Mammary epithelial cell (primary cell): ENCODE measurements at regions of chr3 and their contacts with region 1.

Region 1: GRCh38 chr3:47890828-47891612 is 88.1 kb downstream of the DHX30 start:
- DNase-seq: no peak
- H3K4me3 ChIP-seq: no peak overlapping the region
- H3K27ac ChIP-seq: no peak overlapping the region
- H3K4me1 ChIP-seq: no peaks in the 10 kb centered on the region
- H3K27me3 ChIP-seq: no peaks in the 10 kb centered on the region
- CTCF ChIP-seq: no peak

Region 2: DNA sequence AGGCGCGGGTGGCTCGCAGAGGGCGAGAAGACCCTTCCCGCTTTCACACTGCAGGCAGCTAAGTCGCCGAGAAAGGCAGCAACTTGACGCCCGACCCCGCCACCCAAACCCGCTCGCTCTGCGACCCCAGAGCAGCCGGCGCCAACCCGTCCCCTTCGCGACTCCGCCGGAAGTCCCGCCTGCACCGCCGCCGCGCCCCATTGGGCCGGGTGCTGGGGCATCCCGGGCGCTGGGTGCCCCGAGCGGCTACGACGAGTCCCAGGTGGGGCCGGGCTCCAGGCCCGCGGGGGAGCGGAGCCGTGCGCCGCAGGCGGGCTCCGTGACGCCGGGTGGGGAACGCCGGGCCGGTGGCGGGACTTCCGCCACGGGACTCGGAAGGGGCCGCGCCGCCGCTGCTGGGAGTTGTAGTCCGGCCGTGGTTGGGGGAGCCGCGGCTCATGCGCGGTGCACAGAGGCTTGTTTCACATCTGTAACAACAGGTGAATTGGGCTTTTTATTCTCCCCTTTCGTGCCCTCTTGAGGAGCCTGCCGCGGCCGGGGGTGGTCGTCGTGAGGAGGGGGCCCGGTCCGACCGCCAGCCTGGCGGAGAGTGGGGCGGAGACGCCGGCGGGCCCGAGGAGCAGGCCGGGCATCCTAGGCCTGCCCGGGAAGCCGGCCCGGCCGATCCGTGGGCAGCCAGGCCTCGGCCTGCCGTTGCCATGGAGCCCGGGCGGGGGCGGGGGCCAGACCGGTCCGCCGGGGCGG is 88.1 kb before region 1 on chr3 and contains the start of gene DHX30:
- CTCF ChIA-PET with region 1: no interaction called
- dilution Hi-C with region 1: no loop called
- in situ Hi-C with region 1: no loop called
- intact Hi-C with region 1: no loop called
- DNase-seq: peak; percentile 86
- H3K4me3 ChIP-seq: peak within 1 kb of the TSS; percentile 74 to 92 (median 89)
- H3K27ac ChIP-seq: peak within 1 kb of the TSS; percentile 89
- H3K4me1 ChIP-seq: peaks cover 19% of the 10 kb centered on the region
- H3K27me3 ChIP-seq: no peaks in the 10 kb centered on the region
- CTCF ChIP-seq: no peak
- total RNA-seq, gene DHX30: 60.5 to 61.6 TPM

Region 3: DNA sequence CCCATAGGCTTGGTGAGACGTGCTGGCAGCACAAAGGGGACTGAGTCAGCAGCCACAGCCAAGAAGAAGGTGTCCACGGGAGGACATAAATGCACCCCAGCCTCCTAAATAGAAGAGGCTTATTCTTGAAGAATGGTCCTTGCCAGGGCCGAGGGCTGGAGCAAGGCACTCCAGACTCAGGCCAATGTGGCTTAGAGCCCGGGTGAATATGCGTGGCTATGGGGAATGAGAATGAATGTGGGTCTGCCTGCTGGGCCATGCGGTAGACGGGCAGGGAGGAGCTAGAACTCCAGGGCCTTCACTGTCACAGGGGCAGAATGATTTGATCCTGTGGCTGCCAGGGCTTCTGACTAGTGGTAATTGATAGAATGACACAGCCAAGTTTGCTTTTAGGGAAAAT is 54.0 kb before region 1 on chr3:
- CTCF ChIA-PET with region 1: no interaction called
- dilution Hi-C with region 1: loop called (anchors 5 kb)
- in situ Hi-C with region 1: no loop called
- intact Hi-C with region 1: no loop called
- DNase-seq: no peak
- H3K4me3 ChIP-seq: no peak overlapping the region
- H3K27ac ChIP-seq: no peak overlapping the region
- H3K4me1 ChIP-seq: no peaks in the 10 kb centered on the region
- H3K27me3 ChIP-seq: no peaks in the 10 kb centered on the region
- CTCF ChIP-seq: no peak

Region 4: GRCh38 chr3:47954567-47954966 is 63.5 kb after region 1 on chr3:
- CTCF ChIA-PET with region 1: no interaction called
- dilution Hi-C with region 1: loop called (anchors 5 kb)
- in situ Hi-C with region 1: no loop called
- intact Hi-C with region 1: no loop called
- DNase-seq: no peak
- H3K4me3 ChIP-seq: no peak overlapping the region
- H3K27ac ChIP-seq: no peak overlapping the region
- H3K4me1 ChIP-seq: no peaks in the 10 kb centered on the region
- H3K27me3 ChIP-seq: no peaks in the 10 kb centered on the region
- CTCF ChIP-seq: no peak

Region 5: DNA sequence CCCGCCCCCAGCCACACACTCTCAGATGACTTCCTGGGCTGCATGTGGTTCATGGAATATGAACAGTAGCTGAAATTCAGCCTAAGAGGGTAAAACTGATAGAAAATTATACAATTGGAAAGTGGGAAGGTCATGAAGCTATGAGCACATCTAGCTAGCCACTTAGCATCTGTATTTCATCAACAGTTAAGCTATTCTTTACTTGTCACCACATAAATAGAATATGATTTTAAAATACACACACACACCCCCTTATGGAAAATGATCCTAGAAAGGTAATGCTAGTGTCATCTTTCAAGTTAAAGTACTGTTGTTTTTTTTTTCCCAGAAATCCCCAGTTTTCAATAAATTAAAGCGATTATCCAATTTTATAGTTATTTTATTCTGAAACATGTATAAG is 121.6 kb after region 1 on chr3:
- CTCF ChIA-PET with region 1: no interaction called
- dilution Hi-C with region 1: no loop called
- in situ Hi-C with region 1: no loop called
- intact Hi-C with region 1: no loop called
- DNase-seq: no peak
- H3K4me3 ChIP-seq: no peak overlapping the region
- H3K27ac ChIP-seq: no peak overlapping the region
- H3K4me1 ChIP-seq: peaks cover 26% of the 10 kb centered on the region
- H3K27me3 ChIP-seq: no peaks in the 10 kb centered on the region
- CTCF ChIP-seq: no peak

Region 6: DNA sequence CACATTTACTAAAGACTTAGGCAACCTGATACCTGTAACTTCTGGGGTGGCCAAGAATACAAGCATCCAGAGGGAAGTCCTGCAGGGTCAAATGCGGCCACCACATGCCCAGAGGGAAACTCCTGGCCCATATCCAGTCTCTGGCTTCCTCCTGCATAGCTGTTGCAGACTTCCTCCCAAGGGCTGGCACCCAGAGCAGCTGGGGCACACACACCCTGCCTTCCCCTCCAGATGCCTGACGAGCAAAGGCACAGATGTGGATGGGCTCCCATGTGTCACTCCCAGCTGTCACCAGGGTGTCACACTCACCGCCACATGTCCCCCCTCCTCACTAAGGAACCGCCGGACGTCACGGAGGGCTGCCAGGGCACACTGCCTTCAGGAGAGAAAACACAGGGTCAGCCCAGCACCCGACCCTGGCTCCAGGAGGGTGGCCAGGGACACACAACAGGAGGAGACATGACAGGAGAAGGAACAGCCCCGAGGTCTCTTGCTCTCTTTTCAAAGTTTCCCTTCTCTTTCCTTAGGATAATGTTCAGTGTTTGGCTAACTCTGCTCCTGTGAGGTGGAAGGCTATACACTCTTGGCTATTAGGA is 652.3 kb after region 1 on chr3:
- CTCF ChIA-PET with region 1: no interaction called
- dilution Hi-C with region 1: no loop called
- in situ Hi-C with region 1: no loop called
- intact Hi-C with region 1: no loop called
- DNase-seq: no peak
- H3K4me3 ChIP-seq: no peak overlapping the region
- H3K27ac ChIP-seq: no peak overlapping the region
- H3K4me1 ChIP-seq: no peaks in the 10 kb centered on the region
- H3K27me3 ChIP-seq: no peaks in the 10 kb centered on the region
- CTCF ChIP-seq: no peak